ENCODE measurements at regions of chr17 and their contacts with region 1.

Region 1: DNA sequence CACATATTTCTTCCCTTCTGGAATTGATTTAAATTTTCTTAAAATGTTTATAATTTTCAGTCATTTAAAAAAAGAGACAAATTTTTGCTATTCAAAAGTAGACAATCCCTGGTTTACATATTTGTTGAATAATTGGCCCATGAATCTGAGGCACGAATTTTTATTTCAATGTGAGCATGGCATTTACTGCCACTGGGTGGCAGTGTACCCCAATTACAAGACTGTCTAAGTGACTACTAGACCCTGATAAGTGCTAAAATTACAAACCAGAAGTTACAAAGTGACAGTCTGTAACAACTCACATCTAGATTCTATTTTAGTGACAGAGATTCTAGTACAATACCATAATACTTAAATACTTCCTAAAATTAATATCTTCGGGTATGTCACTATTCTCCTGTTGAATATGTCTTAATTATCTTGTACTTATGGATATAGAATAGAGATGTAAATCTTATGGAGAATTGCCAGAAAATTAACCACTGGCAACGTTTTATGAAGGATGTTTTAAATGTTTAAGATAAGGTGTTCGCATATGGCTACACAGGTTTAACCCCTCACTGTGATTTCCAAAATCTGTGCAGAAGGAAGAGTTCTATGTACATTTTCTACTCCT is 235.8 kb downstream of the MAP2K4 start:
- DNase-seq: no peak
- ATAC-seq: peak; percentile 69
- H3K4me3 Mint-ChIP-seq: no peak overlapping the region
- H3K27ac Mint-ChIP-seq: no peak overlapping the region
- H3K4me1 Mint-ChIP-seq: peaks cover 6% of the 10 kb centered on the region
- H3K27me3 Mint-ChIP-seq: no peaks in the 10 kb centered on the region
- CTCF ChIP-seq: peak; percentile 13

Region 2: GRCh38 chr17:10513299-10514067 is 1743.0 kb before region 1 on chr17:
- CTCF ChIA-PET with region 1: no interaction called
- POLR2A ChIA-PET with region 1: no interaction called
- intact Hi-C with region 1: no loop called
- DNase-seq: no peak
- ATAC-seq: no peak
- H3K4me3 Mint-ChIP-seq: no peak overlapping the region
- H3K27ac Mint-ChIP-seq: no peak overlapping the region
- H3K4me1 Mint-ChIP-seq: no peaks in the 10 kb centered on the region
- H3K27me3 Mint-ChIP-seq: no peaks in the 10 kb centered on the region
- CTCF ChIP-seq: no peak

Region 3: DNA sequence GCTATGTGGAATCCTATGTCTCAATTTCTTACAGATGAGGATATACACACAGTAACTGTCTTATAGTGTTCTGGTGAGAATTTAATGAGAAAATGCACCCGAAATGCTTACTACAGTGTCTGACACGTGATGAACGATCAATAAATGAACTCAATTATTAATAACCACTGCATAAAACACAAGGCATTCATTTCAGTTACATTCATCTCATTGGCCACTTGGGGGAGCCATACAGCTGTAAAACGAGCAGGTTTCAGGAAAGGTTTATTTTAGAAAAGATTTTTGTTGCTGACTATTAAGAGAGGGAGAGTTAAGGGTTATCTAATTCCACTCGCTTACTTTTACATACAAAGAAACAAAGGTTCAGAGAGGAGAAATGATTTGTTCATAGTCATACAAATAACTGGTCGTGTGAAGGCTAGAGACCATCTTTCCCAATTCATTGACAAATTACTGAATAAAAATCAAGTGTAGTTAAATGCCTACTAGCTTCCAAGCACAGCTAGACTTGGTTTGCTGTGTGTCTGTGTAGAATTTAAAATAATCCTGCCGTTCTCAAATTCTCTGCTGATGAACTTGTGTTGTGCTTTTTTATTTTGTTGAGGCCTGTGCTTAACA is 75.7 kb before region 1 on chr17:
- CTCF ChIA-PET with region 1: interaction called, 5 read pairs
- POLR2A ChIA-PET with region 1: no interaction called
- intact Hi-C with region 1: loop called (anchors 1 kb)
- DNase-seq: no peak
- ATAC-seq: no peak
- H3K4me3 Mint-ChIP-seq: no peak overlapping the region
- H3K27ac Mint-ChIP-seq: no peak overlapping the region
- H3K4me1 Mint-ChIP-seq: no peaks in the 10 kb centered on the region
- H3K27me3 Mint-ChIP-seq: no peaks in the 10 kb centered on the region
- CTCF ChIP-seq: peak; percentile 65

Region 4: DNA sequence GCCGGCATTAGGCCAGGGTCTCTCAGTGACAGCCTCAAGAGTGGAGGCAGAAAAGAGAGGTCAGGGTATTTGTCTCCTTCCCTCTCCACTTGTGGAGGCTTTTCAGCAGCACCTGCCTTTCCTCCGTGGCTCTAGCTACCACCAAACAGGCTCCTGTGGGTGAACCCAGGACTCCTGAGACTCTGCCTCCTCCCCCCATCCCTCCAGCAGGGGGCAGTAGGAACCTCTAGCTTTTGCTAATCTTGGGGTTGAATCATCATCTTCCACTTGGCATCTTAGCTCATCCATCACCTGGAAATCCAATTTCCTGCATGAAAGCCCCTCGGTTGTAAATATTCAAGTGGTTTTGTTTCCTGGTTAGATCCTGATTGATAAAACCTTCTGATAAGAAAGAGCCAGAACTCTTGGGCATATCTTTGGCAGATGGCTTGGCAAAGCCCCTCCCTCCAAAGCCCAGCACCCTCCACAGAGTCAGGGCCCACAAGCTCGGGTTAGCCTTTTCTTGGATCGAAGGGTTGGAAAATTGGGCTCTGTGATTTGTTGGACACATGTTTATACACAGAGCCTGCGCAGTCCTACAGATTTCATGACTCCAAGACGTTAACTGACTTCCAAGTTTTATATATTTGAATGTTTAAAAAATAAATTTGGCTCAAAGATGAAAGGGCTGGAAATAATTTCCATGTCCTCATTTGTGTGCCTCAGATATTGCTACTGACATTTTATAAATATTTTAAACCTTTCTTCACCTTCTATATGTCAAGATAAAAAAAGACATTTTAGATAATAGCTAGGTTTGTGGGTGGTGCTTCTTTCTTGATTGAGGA is 86.3 kb after region 1 on chr17:
- CTCF ChIA-PET with region 1: interaction called, 5 read pairs
- POLR2A ChIA-PET with region 1: no interaction called
- intact Hi-C with region 1: loop called (anchors 1 kb)
- DNase-seq: no peak
- ATAC-seq: peak; percentile 37
- H3K4me3 Mint-ChIP-seq: no peak overlapping the region
- H3K27ac Mint-ChIP-seq: no peak overlapping the region
- H3K4me1 Mint-ChIP-seq: no peaks in the 10 kb centered on the region
- H3K27me3 Mint-ChIP-seq: no peaks in the 10 kb centered on the region
- CTCF ChIP-seq: no peak

Region 5: DNA sequence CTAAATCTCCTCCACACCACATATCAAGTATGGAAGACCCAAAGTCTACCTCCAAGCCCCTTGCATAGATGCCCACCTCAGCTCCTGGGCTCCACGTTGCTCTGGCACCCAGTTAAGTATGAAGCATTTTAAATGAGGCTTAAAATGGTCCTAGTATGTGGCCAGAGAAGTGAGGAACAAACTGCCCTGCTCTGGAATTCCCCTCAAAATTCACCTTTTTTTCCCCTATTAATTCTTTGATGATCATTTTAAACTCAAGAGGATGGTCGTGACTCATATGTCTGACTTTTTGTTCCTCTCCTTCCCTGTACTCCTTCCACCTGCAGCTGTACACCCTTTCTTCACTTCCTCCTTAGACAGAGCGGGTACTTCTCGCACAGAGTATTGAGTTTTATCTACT is 174.7 kb after region 1 on chr17:
- CTCF ChIA-PET with region 1: no interaction called
- POLR2A ChIA-PET with region 1: interaction called, 8 read pairs
- intact Hi-C with region 1: loop called (anchors 5 kb)
- DNase-seq: no peak
- ATAC-seq: peak; percentile 83
- H3K4me3 Mint-ChIP-seq: peak overlapping the region; percentile 59
- H3K27ac Mint-ChIP-seq: peak overlapping the region; percentile 95
- H3K4me1 Mint-ChIP-seq: peaks cover 66% of the 10 kb centered on the region
- H3K27me3 Mint-ChIP-seq: no peaks in the 10 kb centered on the region
- CTCF ChIP-seq: no peak

Region 6: DNA sequence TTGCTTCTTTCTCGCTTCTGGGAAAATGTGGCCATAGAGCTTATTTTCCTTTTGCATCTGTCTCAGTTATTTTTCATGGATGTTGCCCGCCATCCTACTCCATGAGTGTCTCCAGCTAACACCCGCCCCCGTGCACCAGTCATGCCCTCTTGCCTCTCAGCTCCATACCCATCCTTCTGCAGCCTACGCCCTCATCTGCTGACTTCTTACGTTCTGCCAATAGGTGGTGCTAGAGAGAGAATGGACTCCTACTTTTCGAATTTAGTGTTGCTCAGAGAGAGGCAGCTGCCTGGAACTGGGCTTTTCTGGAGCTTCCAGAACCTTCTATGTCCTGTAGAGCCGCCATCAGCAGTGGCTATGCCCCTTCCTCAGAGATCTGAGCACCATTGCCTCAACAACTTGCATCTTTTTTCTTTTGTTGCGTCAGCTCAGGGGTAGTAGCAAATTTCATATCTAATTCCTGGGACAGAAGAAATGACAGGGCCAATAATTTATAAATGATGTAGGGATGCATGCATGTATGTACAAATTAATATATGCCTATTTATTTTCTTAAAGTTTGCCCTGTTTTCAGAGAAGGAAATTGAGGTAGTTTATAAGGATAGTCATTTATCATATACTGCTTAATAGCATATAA is 289.5 kb after region 1 on chr17:
- CTCF ChIA-PET with region 1: interaction called, 14 read pairs
- POLR2A ChIA-PET with region 1: no interaction called
- intact Hi-C with region 1: loop called (anchors 2 kb)
- DNase-seq: no peak
- ATAC-seq: peak; percentile 78
- H3K4me3 Mint-ChIP-seq: no peak overlapping the region
- H3K27ac Mint-ChIP-seq: no peak overlapping the region
- H3K4me1 Mint-ChIP-seq: peaks cover 2% of the 10 kb centered on the region
- H3K27me3 Mint-ChIP-seq: no peaks in the 10 kb centered on the region
- CTCF ChIP-seq: no peak

Region 7: DNA sequence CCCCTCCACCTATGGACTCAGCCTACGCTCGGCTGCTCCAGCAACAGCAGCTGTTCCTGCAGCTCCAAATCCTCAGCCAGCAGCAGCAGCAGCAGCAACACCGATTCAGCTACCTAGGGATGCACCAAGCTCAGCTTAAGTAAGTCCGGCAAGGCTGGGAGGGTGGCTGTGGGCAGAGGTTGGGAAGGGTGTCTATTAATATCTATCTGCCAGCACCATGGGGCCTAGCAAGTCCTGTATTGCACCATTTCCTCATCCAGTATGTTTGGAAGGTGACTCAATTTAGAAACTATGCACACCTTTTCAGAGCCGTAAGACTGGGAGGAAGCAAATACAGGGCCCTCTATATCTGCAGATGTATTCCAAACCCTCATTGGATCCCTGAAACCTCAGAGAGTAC is 487.8 kb after region 1 on chr17:
- CTCF ChIA-PET with region 1: interaction called, 16 read pairs
- POLR2A ChIA-PET with region 1: interaction called, 4 read pairs
- intact Hi-C with region 1: loop called (anchors 1 kb)
- DNase-seq: no peak
- ATAC-seq: no peak
- H3K4me3 Mint-ChIP-seq: no peak overlapping the region
- H3K27ac Mint-ChIP-seq: no peak overlapping the region
- H3K4me1 Mint-ChIP-seq: no peaks in the 10 kb centered on the region
- H3K27me3 Mint-ChIP-seq: peaks cover 4% of the 10 kb centered on the region
- CTCF ChIP-seq: no peak

Region 8: GRCh38 chr17:13002766-13003451 is 746.4 kb after region 1 on chr17:
- CTCF ChIA-PET with region 1: interaction called, 23 read pairs
- POLR2A ChIA-PET with region 1: no interaction called
- intact Hi-C with region 1: loop called (anchors 1 kb)
- DNase-seq: peak; percentile 43
- ATAC-seq: peak; percentile 56
- H3K4me3 Mint-ChIP-seq: no peak overlapping the region
- H3K27ac Mint-ChIP-seq: no peak overlapping the region
- H3K4me1 Mint-ChIP-seq: no peaks in the 10 kb centered on the region
- H3K27me3 Mint-ChIP-seq: no peaks in the 10 kb centered on the region
- CTCF ChIP-seq: no peak